Esophagus muscularis mucosa (tissue), 4 donors: ENCODE measurements at regions of chr12 and their contacts with region 1.

Region 1: GRCh38 chr12:116277393-116278278 is at the start of gene MED13L:
- DNase-seq: peak; percentile 97
- H3K4me3 ChIP-seq: peak within 1 kb of the TSS; percentile 70 to 97 (median 76)
- H3K27ac ChIP-seq: peak within 1 kb of the TSS; percentile 89 to 97 (median 95)
- H3K4me1 ChIP-seq: peaks cover 32 to 42% (median 36%) of the 10 kb centered on the region in 4 donors
- H3K27me3 ChIP-seq: no peaks in the 10 kb centered on the region
- CTCF ChIP-seq: peak; percentile 49 to 64 (median 53)
- EP300 ChIP-seq: no peak
- POLR2A ChIP-seq: no peak
- total RNA-seq, gene MED13L: 141 to 350 (median 175) TPM

Region 2: GRCh38 chr12:115998119-115998633 is 279.5 kb before region 1 on chr12:
- intact Hi-C with region 1: loop called (anchors 5 kb)
- DNase-seq: no peak
- H3K4me3 ChIP-seq: no peak overlapping the region
- H3K27ac ChIP-seq: peak overlapping the region; percentile 44 to 71 (median 52)
- H3K4me1 ChIP-seq: peaks cover 12 to 29% (median 25%) of the 10 kb centered on the region in 4 donors
- H3K27me3 ChIP-seq: no peaks in the 10 kb centered on the region
- CTCF ChIP-seq: peak; percentile 74 to 90 (median 78)
- EP300 ChIP-seq: no peak
- POLR2A ChIP-seq: no peak

Region 3: GRCh38 chr12:116336542-116337065 is 59.0 kb after region 1 on chr12:
- intact Hi-C with region 1: no loop called
- DNase-seq: no peak
- H3K4me3 ChIP-seq: no peak overlapping the region
- H3K27ac ChIP-seq: no peak overlapping the region
- H3K4me1 ChIP-seq: peaks cover 0 to 6% (median 0%) of the 10 kb centered on the region in 4 donors
- H3K27me3 ChIP-seq: no peaks in the 10 kb centered on the region
- CTCF ChIP-seq: no peak
- EP300 ChIP-seq: no peak
- POLR2A ChIP-seq: no peak

Region 4: DNA sequence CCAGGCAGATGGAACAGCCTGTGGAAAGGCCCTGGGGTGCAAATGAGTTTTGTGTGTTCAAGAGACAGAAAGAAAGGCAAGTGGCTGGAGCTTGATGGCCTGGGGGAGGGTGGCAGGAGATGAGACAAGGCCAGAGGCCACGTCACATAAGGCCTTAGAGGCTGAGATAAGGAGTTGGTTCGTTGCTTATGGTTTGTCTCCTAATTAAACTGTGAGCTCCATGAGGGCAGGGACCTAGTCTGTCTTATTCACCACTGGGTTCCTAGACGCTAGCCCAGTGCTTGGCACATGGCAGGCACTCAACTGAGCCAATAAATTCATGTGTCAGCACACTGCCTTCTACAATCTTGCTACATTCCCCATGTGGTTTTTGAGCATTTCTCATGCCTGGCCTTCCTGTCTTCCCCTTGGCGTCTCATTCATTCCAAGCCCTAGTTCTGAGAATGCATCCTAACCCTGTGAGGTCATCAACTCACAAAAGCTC is 92.3 kb after region 1 on chr12:
- intact Hi-C with region 1: loop called (anchors 10 kb)
- DNase-seq: no peak
- H3K4me3 ChIP-seq: no peak overlapping the region
- H3K27ac ChIP-seq: no peak overlapping the region
- H3K4me1 ChIP-seq: peaks cover 0 to 7% (median 4%) of the 10 kb centered on the region in 4 donors
- H3K27me3 ChIP-seq: no peaks in the 10 kb centered on the region
- CTCF ChIP-seq: no peak
- EP300 ChIP-seq: no peak
- POLR2A ChIP-seq: no peak

Region 5: GRCh38 chr12:116525418-116526001 is 247.9 kb after region 1 on chr12:
- intact Hi-C with region 1: loop called (anchors 5 kb)
- DNase-seq: no peak
- H3K4me3 ChIP-seq: peak overlapping the region; percentile 13 to 38 (median 30)
- H3K27ac ChIP-seq: peak overlapping the region; percentile 81 to 88 (median 84)
- H3K4me1 ChIP-seq: peaks cover 10 to 49% (median 48%) of the 10 kb centered on the region in 4 donors
- H3K27me3 ChIP-seq: no peaks in the 10 kb centered on the region
- CTCF ChIP-seq: no peak
- EP300 ChIP-seq: no peak
- POLR2A ChIP-seq: no peak

Region 6: GRCh38 chr12:116547955-116548501 is 270.4 kb after region 1 on chr12:
- intact Hi-C with region 1: loop called (anchors 5 kb)
- DNase-seq: no peak
- H3K4me3 ChIP-seq: no peak overlapping the region
- H3K27ac ChIP-seq: no peak overlapping the region
- H3K4me1 ChIP-seq: peaks cover 14 to 43% (median 38%) of the 10 kb centered on the region in 4 donors
- H3K27me3 ChIP-seq: no peaks in the 10 kb centered on the region
- CTCF ChIP-seq: no peak
- EP300 ChIP-seq: no peak
- POLR2A ChIP-seq: no peak